A673 (cell line): ENCODE measurements at regions of chr14 and their contacts with region 1.

Region 1: DNA sequence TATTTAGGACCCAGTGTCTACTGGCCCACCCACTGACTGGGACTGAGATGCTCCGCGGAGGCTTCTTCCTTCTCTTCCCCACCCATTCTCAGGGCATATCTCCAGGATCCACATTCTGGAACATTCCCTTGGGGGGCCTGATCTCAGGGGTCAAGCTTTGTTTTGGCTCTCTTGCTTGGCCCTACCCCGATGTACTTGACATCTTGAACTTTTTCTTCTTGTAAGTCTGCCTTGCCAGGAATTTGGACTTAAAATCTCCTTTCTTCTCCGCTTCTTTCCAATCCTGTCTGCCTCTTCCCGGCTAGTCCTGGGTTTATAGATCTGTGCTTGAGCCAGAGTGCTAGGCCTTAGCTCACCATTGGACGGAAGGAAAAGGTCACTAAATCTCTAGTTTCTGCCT is 22.1 kb downstream of the DACT1 start:
- DNase-seq: no peak
- H3K4me3 ChIP-seq: no peak overlapping the region
- H3K27ac ChIP-seq: no peak overlapping the region
- H3K4me1 ChIP-seq: no peaks in the 10 kb centered on the region
- H3K27me3 ChIP-seq: no peaks in the 10 kb centered on the region
- CTCF ChIP-seq: no peak

Region 2: DNA sequence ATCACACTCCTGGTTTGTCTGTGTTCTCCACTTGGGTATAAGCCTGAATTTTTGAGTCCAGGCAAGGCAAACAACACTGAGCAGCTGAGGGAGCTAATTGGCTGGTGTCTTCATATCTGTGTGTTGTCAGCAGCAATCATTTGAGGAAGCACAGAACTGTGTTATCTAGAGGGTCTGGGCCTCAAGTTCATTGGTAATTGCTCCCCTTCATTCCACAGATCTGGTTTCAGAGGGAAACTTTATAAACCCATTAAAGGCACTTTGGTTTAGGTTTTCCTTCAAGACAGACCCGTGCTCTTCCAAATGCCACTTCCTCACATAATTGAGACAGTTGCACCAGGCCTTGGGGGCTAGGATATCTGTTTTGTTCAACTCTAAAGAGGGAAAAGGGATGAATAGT is 16.5 kb before region 1 on chr14:
- CTCF ChIA-PET with region 1: interaction called, 11 read pairs
- POLR2A ChIA-PET with region 1: no interaction called
- intact Hi-C with region 1: no loop called
- DNase-seq: no peak
- H3K4me3 ChIP-seq: no peak overlapping the region
- H3K27ac ChIP-seq: no peak overlapping the region
- H3K4me1 ChIP-seq: peaks cover 11% of the 10 kb centered on the region
- H3K27me3 ChIP-seq: no peaks in the 10 kb centered on the region
- CTCF ChIP-seq: no peak